ENCODE measurements at regions of chr22 and their contacts with region 1.

Region 1: GRCh38 chr22:38656256-38657044 is at the starts of genes CBY1 and FAM227A:
- DNase-seq: peak; percentile 89
- ATAC-seq: peak; percentile 83
- H3K4me3 Mint-ChIP-seq: peak within 1 kb of the TSS; percentile 79
- H3K27ac Mint-ChIP-seq: peak within 1 kb of the TSS; percentile 93
- H3K4me1 Mint-ChIP-seq: peaks cover 11% of the 10 kb centered on the region
- H3K27me3 Mint-ChIP-seq: no peaks in the 10 kb centered on the region
- total RNA-seq, gene CBY1: 9.8 to 11.6 TPM
- total RNA-seq, gene FAM227A: 0.30 to 0.63 TPM

Region 2: GRCh38 chr22:38317122-38317994 is 339.1 kb before region 1 on chr22 and contains the start of gene CSNK1E:
- CTCF ChIA-PET with region 1: no interaction called
- POLR2A ChIA-PET with region 1: no interaction called
- intact Hi-C with region 1: loop called in 1 of 2 experiments (anchors 5 kb)
- DNase-seq: peak; percentile 84
- ATAC-seq: peak; percentile 63
- H3K4me3 Mint-ChIP-seq: peak within 1 kb of the TSS; percentile 90
- H3K27ac Mint-ChIP-seq: peak within 1 kb of the TSS; percentile 94
- H3K4me1 Mint-ChIP-seq: peaks cover 41% of the 10 kb centered on the region
- H3K27me3 Mint-ChIP-seq: no peaks in the 10 kb centered on the region
- total RNA-seq, gene CSNK1E: 117 to 145 TPM

Region 3: GRCh38 chr22:38681784-38682335 is 25.4 kb after region 1 on chr22 and contains the start of gene TOMM22:
- CTCF ChIA-PET with region 1: interaction called, 3 read pairs
- POLR2A ChIA-PET with region 1: interaction called, 13 read pairs
- intact Hi-C with region 1: loop called (anchors 1 to 2 kb)
- DNase-seq: peak; percentile 92
- ATAC-seq: peak; percentile 98
- H3K4me3 Mint-ChIP-seq: peak within 1 kb of the TSS; percentile 90
- H3K27ac Mint-ChIP-seq: peak within 1 kb of the TSS; percentile 98
- H3K4me1 Mint-ChIP-seq: peaks cover 20% of the 10 kb centered on the region
- H3K27me3 Mint-ChIP-seq: no peaks in the 10 kb centered on the region
- total RNA-seq, gene TOMM22: 146 to 155 TPM

Region 4: DNA sequence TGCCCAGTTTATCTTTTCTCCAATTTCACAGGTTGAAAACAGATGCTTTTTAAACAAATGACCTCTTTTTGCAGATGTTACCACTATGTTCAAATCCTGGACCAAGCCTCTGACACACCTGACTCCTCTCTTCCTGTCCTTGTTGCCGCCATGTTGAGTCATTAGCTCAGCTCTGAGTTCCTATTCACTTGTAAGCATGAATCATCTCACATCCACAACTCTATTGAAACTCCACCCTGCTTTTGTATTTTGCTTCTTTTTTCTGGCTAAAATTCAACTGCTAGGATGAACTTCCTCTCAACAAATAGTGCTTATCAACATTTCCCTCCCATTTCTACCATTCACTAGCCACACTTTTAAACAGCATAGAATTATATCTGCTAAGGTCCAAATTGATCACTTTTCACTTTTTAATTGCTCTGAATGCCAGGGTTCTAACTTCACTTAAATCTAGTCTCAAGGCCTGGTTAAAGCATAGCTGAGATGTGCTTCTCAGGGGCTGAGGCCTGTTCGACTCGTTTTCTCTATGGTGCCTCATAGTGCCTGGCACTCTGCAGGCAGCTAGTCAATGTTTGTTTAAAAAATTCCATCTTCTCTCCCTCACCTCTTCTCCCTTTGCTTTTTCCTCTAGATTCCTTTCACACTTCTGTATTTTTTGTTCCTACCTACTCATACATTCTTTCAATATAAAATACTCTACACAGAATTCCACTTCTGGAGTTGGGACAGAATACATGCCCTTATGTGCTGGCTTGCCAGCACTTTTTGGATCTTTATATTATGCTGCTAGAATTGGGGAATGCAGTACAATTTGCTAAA is 40.4 kb after region 1 on chr22:
- CTCF ChIA-PET with region 1: no interaction called
- POLR2A ChIA-PET with region 1: no interaction called
- intact Hi-C with region 1: loop called (anchors 1 kb)
- DNase-seq: peak; percentile 73
- ATAC-seq: peak; percentile 74
- H3K4me3 Mint-ChIP-seq: peak overlapping the region; percentile 95
- H3K27ac Mint-ChIP-seq: peak overlapping the region; percentile 95
- H3K4me1 Mint-ChIP-seq: peaks cover 58% of the 10 kb centered on the region
- H3K27me3 Mint-ChIP-seq: no peaks in the 10 kb centered on the region

Region 5: GRCh38 chr22:38973289-38974169 is 317.1 kb after region 1 on chr22:
- CTCF ChIA-PET with region 1: no interaction called
- POLR2A ChIA-PET with region 1: no interaction called
- intact Hi-C with region 1: no loop called
- DNase-seq: peak; percentile 75
- ATAC-seq: peak; percentile 94
- H3K4me3 Mint-ChIP-seq: no peak overlapping the region
- H3K27ac Mint-ChIP-seq: no peak overlapping the region
- H3K4me1 Mint-ChIP-seq: peaks cover 3% of the 10 kb centered on the region
- H3K27me3 Mint-ChIP-seq: peaks cover 10% of the 10 kb centered on the region